Psoas muscle (tissue), 8 donors: ENCODE measurements at regions of chr5 and their contacts with region 1.

Region 1: DNA sequence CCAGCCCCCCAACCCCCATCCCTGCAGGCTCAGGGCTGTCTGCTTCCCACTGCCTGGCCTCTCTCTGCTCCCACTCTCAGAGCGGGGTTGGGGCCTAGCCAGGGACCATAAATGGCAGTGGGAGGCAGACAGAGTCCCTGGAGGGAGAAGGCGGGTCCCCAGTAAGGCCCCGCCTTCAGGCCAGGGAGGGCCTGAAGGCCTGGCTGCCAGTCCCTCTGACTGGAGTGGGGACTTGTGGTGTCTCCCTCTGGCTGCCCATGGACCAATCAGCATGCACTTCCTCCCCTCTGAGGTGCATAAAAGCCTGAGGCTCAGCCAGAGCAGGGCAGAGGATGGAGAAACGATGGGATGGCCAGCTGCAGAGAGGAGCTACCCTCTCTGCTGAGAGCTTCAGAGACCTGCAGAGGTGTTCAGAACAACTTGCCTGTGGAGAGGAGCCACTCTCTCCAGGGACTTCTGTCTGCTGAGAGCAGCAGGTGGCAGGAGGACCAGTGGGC is 2.7 kb upstream of the BTNL9 start:
- DNase-seq: no peak
- ATAC-seq: peak in 1 of 4 donors; percentile 56
- H3K4me3 ChIP-seq: no peak overlapping the region
- H3K27ac ChIP-seq: no peak overlapping the region
- H3K4me1 ChIP-seq: no peaks in the 10 kb centered on the region
- H3K27me3 ChIP-seq: peaks cover 0 to 21% (median under 1%) of the 10 kb centered on the region in 3 donors
- CTCF ChIP-seq: no peak

Region 2: GRCh38 chr5:180868960-180869359 is 168.5 kb before region 1 on chr5:
- intact Hi-C with region 1: loop called in 1 of 2 experiments (anchors 5 kb)
- DNase-seq: peak; percentile 75 to 84
- ATAC-seq: peak in 3 of 4 donors; percentile 55 to 85 (median 72)
- H3K4me3 ChIP-seq: no peak overlapping the region
- H3K27ac ChIP-seq: no peak overlapping the region
- H3K4me1 ChIP-seq: no peaks in the 10 kb centered on the region
- H3K27me3 ChIP-seq: peaks cover 0 to 6% (median 0%) of the 10 kb centered on the region in 3 donors
- CTCF ChIP-seq: peak; percentile 67